KBM-7 (cell line): ENCODE measurements at regions of chr21 and their contacts with region 1.

Region 1: GRCh38 chr21:43810505-43811261 is 21.3 kb downstream of the RRP1 start:
- DNase-seq: peak; percentile 91

Region 2: GRCh38 chr21:43277481-43278351 is 533.0 kb before region 1 on chr21:
- in situ Hi-C with region 1: no loop called
- DNase-seq: no peak

Region 3: GRCh38 chr21:43611598-43612369 is 198.9 kb before region 1 on chr21:
- in situ Hi-C with region 1: no loop called
- DNase-seq: peak; percentile 51

Region 4: GRCh38 chr21:43684424-43684823 is 126.3 kb before region 1 on chr21:
- in situ Hi-C with region 1: no loop called
- DNase-seq: no peak

Region 5: GRCh38 chr21:43916691-43917514 is 106.2 kb after region 1 on chr21:
- in situ Hi-C with region 1: no loop called
- DNase-seq: peak; percentile 76

Region 6: DNA sequence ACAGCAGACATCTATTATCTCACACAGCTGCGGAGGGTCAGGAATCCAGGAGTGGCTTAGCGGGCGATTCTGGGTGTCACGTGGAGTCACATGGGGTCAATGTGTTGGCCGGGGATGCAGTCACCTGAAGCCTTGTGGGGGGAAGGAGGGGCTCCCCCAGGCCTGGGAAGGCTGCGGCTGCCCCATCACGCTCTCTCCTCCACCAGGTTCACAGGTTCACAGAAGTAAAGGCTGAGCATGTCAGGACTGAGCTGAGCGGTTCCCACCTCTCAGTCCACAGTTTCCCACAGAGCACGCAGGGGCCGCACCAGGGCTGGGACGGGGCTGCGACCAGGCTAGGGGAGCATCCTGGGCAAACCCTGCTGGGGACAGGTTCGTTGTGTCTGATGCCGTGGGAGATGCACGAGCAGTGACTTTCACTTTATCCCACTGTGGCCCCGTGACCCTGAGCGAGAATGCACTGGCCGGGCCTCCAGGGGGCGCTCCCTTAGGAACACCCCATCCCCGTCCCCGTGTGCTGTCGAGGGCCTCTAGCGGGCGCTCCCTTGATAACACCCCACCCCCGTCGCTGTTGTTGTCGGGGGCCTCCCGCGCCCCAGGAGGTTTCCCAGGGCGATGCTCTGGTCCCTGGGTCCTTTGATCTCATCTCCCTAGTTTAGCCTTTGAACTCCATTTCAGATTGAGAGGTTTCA is 128.2 kb after region 1 on chr21:
- in situ Hi-C with region 1: loop called (anchors 25 kb)
- DNase-seq: peak; percentile 90

Region 7: GRCh38 chr21:44338971-44339910 is 528.6 kb after region 1 on chr21 and contains the start of gene CFAP410:
- in situ Hi-C with region 1: loop called (anchors 25 kb)
- DNase-seq: peak; percentile 96